GM12878 (cell line): ENCODE measurements at regions of chr18 and their contacts with region 1.

Region 1: GRCh38 chr18:35171315-35171987 is 69.4 kb upstream of the ZNF397 start:
- DNase-seq: no peak
- ATAC-seq: no peak
- H3K4me3 ChIP-seq: no peak overlapping the region
- H3K27ac ChIP-seq: no peak overlapping the region
- H3K4me1 ChIP-seq: no peaks in the 10 kb centered on the region
- H3K27me3 ChIP-seq: no peaks in the 10 kb centered on the region
- CTCF ChIP-seq: no peak
- EP300 ChIP-seq: no peak
- POLR2A ChIP-seq: no peak
- RAD21 ChIP-seq: no peak

Region 2: DNA sequence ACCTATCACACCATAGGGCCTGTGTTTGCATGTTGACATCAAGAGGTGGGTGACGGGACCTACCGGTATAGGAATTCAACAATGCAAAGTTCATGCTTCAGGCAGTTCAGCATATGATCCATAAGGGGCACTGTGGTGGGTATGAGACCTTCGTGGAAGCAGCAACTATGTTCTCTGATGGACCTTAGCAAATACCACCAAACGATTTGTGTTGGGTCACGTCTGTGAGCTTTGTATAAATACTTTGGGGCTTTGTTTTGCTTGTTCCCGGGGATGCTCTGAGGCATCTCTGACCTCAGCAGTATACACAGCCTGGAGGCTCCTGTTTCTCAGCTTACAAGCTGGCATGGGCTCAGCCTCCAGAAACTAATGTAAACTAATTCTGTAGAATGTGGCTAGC is 349.7 kb before region 1 on chr18:
- CTCF ChIA-PET with region 1: no interaction called
- POLR2A ChIA-PET with region 1: no interaction called
- RAD21 ChIA-PET with region 1: no interaction called
- SMC1A ChIA-PET with region 1: no interaction called
- in situ Hi-C with region 1: no loop called
- intact Hi-C with region 1: no loop called
- DNase-seq: no peak
- ATAC-seq: peak; percentile 44; the same call in 1 of the 3 replicates
- H3K4me3 ChIP-seq: no peak overlapping the region
- H3K27ac ChIP-seq: no peak overlapping the region
- H3K4me1 ChIP-seq: no peaks in the 10 kb centered on the region
- H3K27me3 ChIP-seq: no peaks in the 10 kb centered on the region; a peak in 1 of 4 replicates
- CTCF ChIP-seq: no peak
- EP300 ChIP-seq: no peak
- POLR2A ChIP-seq: no peak
- RAD21 ChIP-seq: no peak

Region 3: GRCh38 chr18:35158728-35159450 is 12.6 kb before region 1 on chr18:
- CTCF ChIA-PET with region 1: interaction called, 3 read pairs
- POLR2A ChIA-PET with region 1: interaction called, 3 read pairs
- RAD21 ChIA-PET with region 1: interaction called, 3 read pairs
- SMC1A ChIA-PET with region 1: interaction called, 16 read pairs
- in situ Hi-C with region 1: no loop called
- intact Hi-C with region 1: no loop called
- DNase-seq: no peak
- ATAC-seq: peak; percentile 83
- H3K4me3 ChIP-seq: no peak overlapping the region
- H3K27ac ChIP-seq: no peak overlapping the region
- H3K4me1 ChIP-seq: 0 out of 2 replicates have a peak, but pooled peaks cover 3% of the 10 kb centered on the region
- H3K27me3 ChIP-seq: no peaks in the 10 kb centered on the region
- CTCF ChIP-seq: no peak
- EP300 ChIP-seq: 0 out of 4 replicates have a peak, but pooled peaks of 1 of the 2 experiments have one; percentile 21
- POLR2A ChIP-seq: no peak
- RAD21 ChIP-seq: no peak